ENCODE measurements at regions of chr1 and their contacts with region 1.

Region 1: DNA sequence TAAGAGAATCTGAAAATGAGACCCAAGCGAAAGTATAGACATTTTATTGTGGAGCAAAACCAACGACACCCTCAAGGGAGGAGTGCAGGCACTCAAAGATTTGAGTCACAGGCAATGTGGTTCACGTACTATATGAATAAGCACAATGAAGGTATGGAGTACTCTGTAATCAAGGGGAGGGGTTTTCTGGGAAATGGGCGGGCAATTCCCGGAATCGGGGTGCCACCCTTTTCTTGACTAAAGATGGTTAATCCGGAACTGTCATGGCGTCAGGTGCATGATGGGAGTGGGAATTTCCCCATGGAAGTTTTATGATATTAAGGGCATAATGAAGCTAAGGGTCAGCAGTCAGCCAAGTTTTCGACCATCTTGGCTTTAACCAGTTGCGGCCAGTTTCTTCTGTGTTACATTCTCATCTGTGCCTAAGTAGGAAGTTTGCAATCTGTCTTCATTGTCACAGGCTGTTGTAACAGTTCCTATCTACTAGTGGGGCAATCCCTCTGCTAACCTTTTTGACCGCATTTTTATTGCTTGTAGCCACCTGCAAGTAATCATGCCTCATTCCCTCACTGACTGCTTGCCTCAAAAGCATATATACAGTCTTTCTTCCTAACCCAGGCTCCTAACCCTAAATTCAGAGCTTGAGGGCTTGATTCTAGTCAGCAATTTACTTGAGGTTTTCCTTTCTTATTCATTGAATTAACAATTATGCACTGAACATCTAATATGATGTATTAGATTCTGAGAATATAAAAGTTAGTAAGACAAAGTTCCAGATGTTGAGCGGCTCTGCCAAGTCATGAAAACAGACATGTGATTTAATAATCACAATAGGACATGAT is 775 bp upstream of the AIM2 start:
- DNase-seq: peak; percentile 49
- CTCF ChIP-seq: no peak

Region 2: DNA sequence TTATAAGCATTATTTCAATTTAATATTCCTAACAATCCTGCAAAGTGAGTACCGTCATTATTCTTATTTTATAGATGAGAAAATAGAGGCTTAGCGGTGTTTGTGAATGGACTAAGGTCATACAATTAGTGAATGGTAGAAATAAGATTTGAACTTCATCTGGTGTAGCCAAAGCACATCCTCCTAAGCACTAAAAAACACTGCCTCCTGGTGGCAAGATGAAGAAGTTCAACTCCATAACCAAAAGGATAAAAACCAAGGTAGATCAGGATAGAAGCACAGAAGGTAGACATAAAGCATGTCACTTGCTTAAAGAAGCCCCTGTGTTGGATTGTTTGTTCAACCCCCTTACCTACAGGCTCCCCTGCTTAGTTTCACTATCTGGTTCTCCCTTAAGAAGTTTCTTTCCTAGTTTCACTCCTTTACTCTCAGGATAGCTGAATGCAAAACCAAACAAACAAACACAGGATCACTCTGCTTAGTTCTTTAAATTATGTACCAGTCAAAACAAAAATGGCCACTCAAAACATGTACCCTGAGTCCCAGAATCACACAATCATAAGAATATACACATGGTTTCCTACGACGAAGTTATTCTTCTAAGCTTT is 11.9 kb after region 1 on chr1:
- CTCF ChIA-PET with region 1: interaction called, 17 read pairs
- POLR2A ChIA-PET with region 1: no interaction called
- DNase-seq: peak; percentile 31
- CTCF ChIP-seq: peak; percentile 51

Measured in GM10248 (cell line).